Activated T-helper 2 cell treated with anti-CD3 and anti-CD28 coated beads, Interferon-gamma antibody, Interleukin-2, Interleukin-4, amounts not matched to agents 10 μg/mL and 5 μg/mL and 100 μg/mL, durations not matched to agents 14 hours and 24 hours and 36 hours (primary cell): ENCODE measurements at regions of chr1 and their contacts with region 1.

Region 1: DNA sequence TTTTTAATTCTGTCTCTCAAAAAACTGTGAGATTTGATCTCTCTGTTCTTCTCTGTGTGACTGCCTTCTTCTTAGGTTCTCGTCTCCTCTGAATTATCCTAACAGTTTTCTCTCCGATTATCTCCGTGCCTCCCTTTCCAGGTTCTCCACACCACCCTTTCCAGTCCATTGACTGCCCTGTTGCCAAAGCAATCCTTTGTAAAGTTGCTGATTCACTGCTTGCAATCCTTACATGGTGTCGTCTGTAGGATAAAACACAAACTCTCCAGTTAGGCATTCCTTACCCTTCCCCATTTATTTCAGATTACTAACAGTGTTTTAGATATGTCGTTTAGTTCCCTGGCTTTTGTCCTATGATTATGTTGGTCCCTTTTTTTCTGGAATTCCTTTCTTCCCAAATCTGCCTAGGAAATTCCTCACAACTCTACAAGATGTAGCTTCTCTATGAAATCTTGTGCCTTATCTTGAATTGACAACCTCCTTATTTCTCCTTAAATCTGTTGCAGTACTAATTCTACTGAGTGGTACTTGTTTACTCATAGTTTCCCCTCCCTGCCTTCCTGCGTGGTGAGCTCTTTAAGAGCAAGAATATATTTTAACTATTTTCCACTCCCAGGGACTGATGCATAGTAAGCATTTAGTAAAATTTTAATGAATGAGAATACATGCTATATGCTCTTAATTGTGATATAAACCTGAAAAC is 22.3 kb downstream of the RCOR3 start:
- DNase-seq: no peak
- H3K4me3 Mint-ChIP-seq: no peak overlapping the region
- H3K27ac Mint-ChIP-seq: no peak overlapping the region
- H3K4me1 Mint-ChIP-seq: peaks cover 2% of the 10 kb centered on the region
- H3K27me3 Mint-ChIP-seq: no peaks in the 10 kb centered on the region

Region 2: DNA sequence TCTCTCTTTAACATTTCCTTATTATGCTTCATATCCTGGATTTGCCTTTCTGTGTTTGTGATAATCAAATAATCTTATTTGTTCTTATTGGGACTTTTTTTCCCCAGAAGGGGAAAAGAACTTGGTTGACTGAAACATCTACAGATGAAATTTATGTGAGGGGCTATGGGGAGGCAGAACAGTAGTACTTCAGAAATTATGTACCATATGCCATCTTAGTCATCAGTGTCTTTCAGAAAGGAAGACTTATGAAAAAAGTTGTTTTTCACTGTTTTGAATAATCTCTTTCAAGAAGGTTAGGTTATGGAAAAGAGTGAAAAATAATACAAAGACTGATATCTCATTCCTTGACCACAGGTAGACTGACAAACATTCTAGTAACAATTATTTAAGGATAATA is 14.9 kb after region 1 on chr1:
- intact Hi-C with region 1: loop called (anchors 2 kb)
- DNase-seq: no peak
- H3K4me3 Mint-ChIP-seq: no peak overlapping the region
- H3K27ac Mint-ChIP-seq: peak overlapping the region; percentile 75
- H3K4me1 Mint-ChIP-seq: peaks cover 26% of the 10 kb centered on the region
- H3K27me3 Mint-ChIP-seq: no peaks in the 10 kb centered on the region

Region 3: DNA sequence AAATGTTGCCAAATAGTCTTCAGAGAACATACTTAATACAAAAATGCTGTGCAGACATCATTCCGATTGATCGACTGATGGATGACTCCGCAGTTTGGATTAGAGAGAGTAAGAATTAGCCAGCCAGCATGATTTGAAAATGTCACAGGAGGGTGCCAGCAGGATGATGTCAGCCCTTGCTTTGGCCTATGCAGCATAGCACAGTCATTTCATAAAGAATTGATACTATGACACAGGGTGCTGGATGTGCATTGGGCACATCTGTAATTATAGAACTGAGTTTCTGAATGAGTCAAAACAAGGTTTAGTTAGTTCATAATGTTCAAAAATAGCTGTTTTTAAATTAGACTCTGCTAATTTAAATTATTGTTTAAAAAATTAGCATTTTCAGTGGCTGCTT is 23.6 kb after region 1 on chr1:
- intact Hi-C with region 1: loop called (anchors 2 kb)
- DNase-seq: no peak
- H3K4me3 Mint-ChIP-seq: no peak overlapping the region
- H3K27ac Mint-ChIP-seq: peak overlapping the region; percentile 77
- H3K4me1 Mint-ChIP-seq: peaks cover 38% of the 10 kb centered on the region
- H3K27me3 Mint-ChIP-seq: no peaks in the 10 kb centered on the region